A673 (cell line): ENCODE measurements at regions of chr16 and their contacts with region 1.

Region 1: GRCh38 chr16:75555707-75556430 is at the start of gene TMEM231:
- DNase-seq: peak; percentile 98
- H3K4me3 ChIP-seq: peak within 1 kb of the TSS; percentile 87
- H3K27ac ChIP-seq: peak within 1 kb of the TSS; percentile 64
- H3K4me1 ChIP-seq: peaks cover 9% of the 10 kb centered on the region
- H3K27me3 ChIP-seq: no peaks in the 10 kb centered on the region
- CTCF ChIP-seq: no peak
- total RNA-seq, gene TMEM231: 17.3 and 19.4 TPM in 2 replicates

Region 2: GRCh38 chr16:75464130-75464918 is 91.5 kb before region 1 on chr16 and contains the start of gene TMEM170A:
- CTCF ChIA-PET with region 1: no interaction called
- POLR2A ChIA-PET with region 1: no interaction called
- intact Hi-C with region 1: loop called (anchors 2 kb)
- DNase-seq: peak; percentile 99
- H3K4me3 ChIP-seq: peak within 1 kb of the TSS; percentile 76
- H3K27ac ChIP-seq: peak within 1 kb of the TSS; percentile 92
- H3K4me1 ChIP-seq: peaks cover 2% of the 10 kb centered on the region
- H3K27me3 ChIP-seq: no peaks in the 10 kb centered on the region
- CTCF ChIP-seq: peak; percentile 100
- total RNA-seq, gene TMEM170A: 25.9 and 30.4 TPM in 2 replicates